ENCODE measurements at regions of chr12 and their contacts with region 1.

Region 1: DNA sequence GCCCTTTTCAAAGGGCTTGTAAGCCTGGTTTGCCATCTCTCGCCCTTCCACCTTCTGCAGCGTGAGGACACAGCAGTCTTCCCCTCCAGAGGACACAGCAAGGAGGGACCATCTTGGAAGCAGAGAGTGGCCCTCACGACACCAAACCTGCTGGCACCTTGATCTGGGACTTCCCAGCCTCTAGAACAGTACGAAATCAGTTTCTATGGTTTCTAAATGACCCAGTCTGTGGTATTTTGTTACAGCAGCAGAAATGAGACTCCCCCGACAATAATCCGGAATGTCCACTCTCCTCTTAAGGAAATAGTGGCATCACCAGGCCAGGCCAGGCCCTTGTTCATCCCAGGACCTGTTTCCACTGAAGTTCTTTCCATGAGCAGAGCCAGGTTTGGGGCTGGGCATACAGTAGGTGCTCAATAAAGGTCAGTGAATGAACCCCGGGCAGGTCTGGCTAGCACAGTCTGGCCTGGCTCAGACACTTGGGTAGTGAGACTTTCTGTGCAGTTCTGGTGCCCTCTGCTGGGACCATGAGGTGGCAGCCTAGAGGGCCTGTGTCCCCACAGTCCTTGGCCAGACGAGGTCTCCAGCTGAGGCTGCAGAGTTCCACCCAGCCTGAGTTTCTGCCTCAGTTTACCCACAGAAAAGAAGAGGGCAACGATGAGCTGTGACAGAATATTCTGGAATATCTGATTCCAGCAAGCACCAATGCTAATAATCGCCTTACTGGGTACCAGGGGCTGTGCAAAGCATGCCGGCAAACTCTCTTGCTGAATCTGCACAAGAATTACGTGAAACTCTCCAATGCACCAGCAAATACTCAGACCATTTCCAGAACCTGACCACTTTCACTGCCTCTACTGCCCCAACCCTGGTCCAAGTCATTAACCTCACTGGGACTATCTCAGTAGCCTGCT is 14.0 kb downstream of the ABCB9 start:
- DNase-seq: peak; percentile 50 to 85 (median 76)
- ATAC-seq: peak; percentile 99
- H3K4me3 ChIP-seq: no peak overlapping the region
- H3K4me3 Mint-ChIP-seq: no peak overlapping the region
- H3K27ac ChIP-seq: no peak overlapping the region
- H3K27ac Mint-ChIP-seq: peak overlapping the region; percentile 45
- H3K4me1 ChIP-seq: peaks cover 6% of the 10 kb centered on the region
- H3K4me1 Mint-ChIP-seq: peaks cover 4% of the 10 kb centered on the region
- H3K27me3 ChIP-seq: no peaks in the 10 kb centered on the region
- H3K27me3 Mint-ChIP-seq: no peaks in the 10 kb centered on the region
- CTCF ChIP-seq: peak; percentile 91

Region 2: DNA sequence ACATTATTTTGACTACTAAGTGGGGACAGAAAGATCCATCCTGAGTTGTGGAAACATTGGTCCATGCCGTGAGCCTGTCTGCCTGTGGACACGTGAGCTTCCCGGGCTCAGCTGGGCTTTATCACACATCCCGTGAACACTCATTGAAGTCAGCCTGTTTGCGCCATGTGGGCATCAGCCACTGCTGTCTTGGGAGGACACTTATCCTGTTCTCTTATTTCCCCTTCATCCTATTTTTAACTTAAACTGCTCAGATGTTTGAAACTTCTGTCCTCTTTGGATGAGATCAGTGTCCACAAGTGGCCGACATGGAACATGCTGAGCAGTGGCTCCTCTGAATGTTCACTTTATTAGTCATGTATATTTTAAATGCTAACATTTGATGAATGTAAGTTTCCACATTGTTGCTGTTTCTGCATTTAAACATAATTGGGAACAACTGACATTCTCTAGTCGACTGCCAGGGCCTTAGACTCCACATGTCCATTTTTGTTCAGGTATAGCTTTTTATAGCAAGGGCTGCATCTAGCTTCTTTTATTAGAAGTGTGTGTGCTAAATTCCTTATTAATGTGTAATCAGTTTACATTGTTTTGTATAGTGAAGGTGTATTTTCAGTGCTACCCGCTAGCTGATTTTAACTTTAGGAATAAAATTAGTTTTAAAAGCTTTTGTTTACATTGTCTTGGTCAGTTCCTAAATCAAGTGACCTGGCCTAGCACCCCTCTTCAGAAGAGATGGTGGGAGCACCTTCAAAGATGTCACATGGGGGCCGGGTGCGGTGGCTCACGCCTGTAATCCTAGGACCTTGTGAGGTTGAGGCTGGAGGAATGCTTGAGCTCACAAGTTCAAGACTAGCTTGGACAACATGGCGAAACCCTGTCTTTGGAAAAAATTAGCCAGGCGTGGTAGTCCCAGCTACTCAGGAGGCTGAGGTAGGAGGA is 1528.3 kb before region 1 on chr12:
- CTCF ChIA-PET with region 1: no interaction called
- POLR2A ChIA-PET with region 1: no interaction called
- intact Hi-C with region 1: no loop called
- DNase-seq: no peak
- ATAC-seq: no peak
- H3K4me3 ChIP-seq: no peak overlapping the region
- H3K4me3 Mint-ChIP-seq: no peak overlapping the region
- H3K27ac ChIP-seq: no peak overlapping the region
- H3K27ac Mint-ChIP-seq: no peak overlapping the region
- H3K4me1 ChIP-seq: no peaks in the 10 kb centered on the region
- H3K4me1 Mint-ChIP-seq: peaks cover 3% of the 10 kb centered on the region
- H3K27me3 ChIP-seq: no peaks in the 10 kb centered on the region
- H3K27me3 Mint-ChIP-seq: no peaks in the 10 kb centered on the region
- CTCF ChIP-seq: no peak

Region 3: GRCh38 chr12:122860346-122861090 is 91.7 kb before region 1 on chr12:
- CTCF ChIA-PET with region 1: interaction called, 311 read pairs
- POLR2A ChIA-PET with region 1: interaction called, 3 read pairs
- intact Hi-C with region 1: loop called (anchors 1 kb)
- DNase-seq: peak; percentile 65 to 92 (median 82)
- ATAC-seq: peak; percentile 61
- H3K4me3 ChIP-seq: no peak overlapping the region
- H3K4me3 Mint-ChIP-seq: no peak overlapping the region
- H3K27ac ChIP-seq: no peak overlapping the region
- H3K27ac Mint-ChIP-seq: peak overlapping the region; percentile 57
- H3K4me1 ChIP-seq: peaks cover 5% of the 10 kb centered on the region
- H3K4me1 Mint-ChIP-seq: peaks cover 3% of the 10 kb centered on the region
- H3K27me3 ChIP-seq: no peaks in the 10 kb centered on the region
- H3K27me3 Mint-ChIP-seq: no peaks in the 10 kb centered on the region
- CTCF ChIP-seq: peak; percentile 64

Region 4: GRCh38 chr12:122871851-122872780 is 80.1 kb before region 1 on chr12:
- CTCF ChIA-PET with region 1: interaction called, 311 read pairs
- POLR2A ChIA-PET with region 1: no interaction called
- intact Hi-C with region 1: no loop called
- DNase-seq: peak in 4 of 9 experiments; percentile 36 to 65 (median 44)
- ATAC-seq: peak; percentile 43
- H3K4me3 ChIP-seq: peak overlapping the region; percentile 19 to 48
- H3K4me3 Mint-ChIP-seq: peak overlapping the region; percentile 85
- H3K27ac ChIP-seq: peak overlapping the region; percentile 3 to 78
- H3K27ac Mint-ChIP-seq: peak overlapping the region; percentile 86
- H3K4me1 ChIP-seq: peaks cover 62% of the 10 kb centered on the region
- H3K4me1 Mint-ChIP-seq: peaks cover 63% of the 10 kb centered on the region
- H3K27me3 ChIP-seq: no peaks in the 10 kb centered on the region
- H3K27me3 Mint-ChIP-seq: no peaks in the 10 kb centered on the region
- CTCF ChIP-seq: no peak

Region 5: DNA sequence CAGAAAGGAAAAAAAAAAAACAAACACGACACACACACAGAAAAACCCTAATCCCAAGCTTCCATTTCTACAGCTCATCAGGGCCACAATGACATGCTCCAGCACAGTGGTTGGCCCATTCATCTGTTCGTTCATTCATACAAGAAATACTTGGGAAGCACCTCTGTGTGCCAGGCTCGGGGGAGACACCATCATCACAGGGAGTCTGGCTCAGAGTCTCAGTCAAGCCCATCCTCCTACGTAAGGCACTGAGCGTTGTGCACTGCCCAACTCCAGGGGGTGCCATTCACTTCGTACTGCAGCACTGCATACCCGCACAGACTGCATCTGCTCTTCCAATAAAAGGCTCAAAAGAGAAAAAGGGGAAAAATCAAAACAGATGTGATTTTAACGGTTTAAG is 71.6 kb before region 1 on chr12:
- CTCF ChIA-PET with region 1: interaction called, 31 read pairs
- POLR2A ChIA-PET with region 1: interaction called, 4 read pairs
- intact Hi-C with region 1: loop called in 1 of 2 experiments (anchors 1 kb)
- DNase-seq: peak in 4 of 9 experiments; percentile 43 to 58 (median 48)
- ATAC-seq: peak; percentile 35
- H3K4me3 ChIP-seq: no peak overlapping the region
- H3K4me3 Mint-ChIP-seq: no peak overlapping the region
- H3K27ac ChIP-seq: peak overlapping the region in 1 of 2 experiments; percentile 37
- H3K27ac Mint-ChIP-seq: peak overlapping the region; percentile 41
- H3K4me1 ChIP-seq: peaks cover 78% of the 10 kb centered on the region
- H3K4me1 Mint-ChIP-seq: peaks cover 91% of the 10 kb centered on the region
- H3K27me3 ChIP-seq: no peaks in the 10 kb centered on the region
- H3K27me3 Mint-ChIP-seq: no peaks in the 10 kb centered on the region
- CTCF ChIP-seq: peak; percentile 36

Region 6: DNA sequence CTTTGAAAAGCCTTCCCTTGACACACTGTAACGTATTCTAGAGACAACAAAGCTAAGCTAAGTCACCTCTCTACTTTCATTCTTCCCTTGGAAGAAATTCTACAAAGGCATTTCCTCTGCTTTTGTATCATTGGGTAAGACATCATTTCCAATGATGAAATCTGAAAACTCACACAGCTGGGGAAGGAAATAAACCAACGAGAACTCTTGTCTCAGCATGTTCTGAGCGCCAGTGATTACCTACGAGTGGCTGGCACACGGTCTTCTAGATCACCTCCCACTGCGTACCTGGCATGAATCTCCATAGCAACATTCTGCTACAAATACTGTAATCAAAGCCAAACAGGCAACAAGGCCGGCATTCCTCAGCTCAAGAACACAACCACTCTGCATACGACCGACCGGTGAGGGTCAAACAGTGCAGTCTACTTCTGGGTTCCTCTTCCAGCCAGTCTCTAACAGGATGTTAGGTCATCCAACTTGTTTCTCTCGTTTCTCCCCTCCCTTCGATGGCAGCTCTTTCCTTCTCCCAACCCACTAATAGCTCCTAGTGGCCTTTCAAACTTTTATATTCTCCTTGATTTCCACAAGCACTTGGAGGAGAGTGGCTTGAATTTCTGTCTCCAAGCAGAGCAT is 63.9 kb before region 1 on chr12:
- CTCF ChIA-PET with region 1: interaction called, 31 read pairs
- POLR2A ChIA-PET with region 1: interaction called, 4 read pairs
- intact Hi-C with region 1: no loop called
- DNase-seq: peak in 6 of 9 experiments; percentile 42 to 89 (median 71)
- ATAC-seq: peak; percentile 88
- H3K4me3 ChIP-seq: peak overlapping the region in 1 of 2 experiments; percentile 26
- H3K4me3 Mint-ChIP-seq: peak overlapping the region; percentile 77
- H3K27ac ChIP-seq: peak overlapping the region; percentile 17 to 63
- H3K27ac Mint-ChIP-seq: peak overlapping the region; percentile 93
- H3K4me1 ChIP-seq: peaks cover 74% of the 10 kb centered on the region
- H3K4me1 Mint-ChIP-seq: peaks cover 87% of the 10 kb centered on the region
- H3K27me3 ChIP-seq: no peaks in the 10 kb centered on the region
- H3K27me3 Mint-ChIP-seq: no peaks in the 10 kb centered on the region
- CTCF ChIP-seq: no peak

Region 7: DNA sequence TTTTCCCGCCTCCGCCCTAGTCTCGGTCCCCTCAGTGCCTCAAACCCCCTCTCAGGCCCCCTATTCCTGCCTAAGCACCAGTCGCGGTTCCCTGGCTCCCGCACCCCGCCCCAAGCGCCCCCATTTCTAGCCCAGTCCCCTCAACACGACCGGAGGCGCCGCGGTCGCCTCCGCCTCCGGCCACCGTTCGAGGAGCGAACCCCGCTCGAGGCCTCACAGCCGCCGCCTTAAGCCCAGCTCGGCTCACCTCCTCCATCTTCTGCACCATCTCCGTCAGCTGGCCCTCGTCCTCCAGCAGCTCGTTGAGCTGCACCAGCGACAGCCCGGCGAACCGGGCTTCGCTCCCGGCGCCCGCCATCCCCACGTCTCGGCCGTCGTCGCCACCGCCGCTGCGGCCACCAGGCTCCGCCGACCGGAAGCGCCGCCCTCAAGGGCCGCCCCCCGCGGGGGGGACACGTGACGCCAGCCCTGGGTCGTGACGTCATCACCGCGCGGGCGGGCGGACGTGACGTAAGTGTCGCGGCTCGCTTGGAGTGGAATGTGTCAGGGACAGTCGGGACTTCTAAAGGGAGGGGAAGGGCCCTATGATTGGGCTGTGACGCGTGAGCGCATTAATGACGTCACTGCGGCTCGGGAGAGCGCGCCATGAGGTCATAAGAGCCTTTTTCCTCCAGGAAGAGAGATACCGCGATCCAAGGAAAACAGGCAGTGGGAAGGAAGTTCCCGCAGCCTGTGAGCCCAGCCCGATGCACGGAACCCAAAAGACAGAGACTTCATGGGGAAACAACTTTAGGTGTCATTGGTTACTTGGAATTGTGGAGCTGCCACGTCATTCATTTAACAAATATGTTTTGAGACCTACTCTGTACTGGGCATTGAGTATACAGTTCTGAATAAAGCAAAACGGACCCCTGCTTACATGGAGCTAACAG is 56.3 kb before region 1 on chr12 and contains the start of gene VPS37B:
- CTCF ChIA-PET with region 1: interaction called, 49 read pairs
- POLR2A ChIA-PET with region 1: interaction called, 3 read pairs
- intact Hi-C with region 1: no loop called
- DNase-seq: peak; percentile 79 to 96 (median 91)
- ATAC-seq: peak; percentile 63
- H3K4me3 ChIP-seq: peak within 1 kb of the TSS; percentile 80 to 93
- H3K4me3 Mint-ChIP-seq: peak within 1 kb of the TSS; percentile 91
- H3K27ac ChIP-seq: peak within 1 kb of the TSS; percentile 92 to 96
- H3K27ac Mint-ChIP-seq: peak within 1 kb of the TSS; percentile 99
- H3K4me1 ChIP-seq: peaks cover 82% of the 10 kb centered on the region
- H3K4me1 Mint-ChIP-seq: peaks cover 89% of the 10 kb centered on the region
- H3K27me3 ChIP-seq: no peaks in the 10 kb centered on the region
- H3K27me3 Mint-ChIP-seq: no peaks in the 10 kb centered on the region
- CTCF ChIP-seq: no peak
- total RNA-seq, gene VPS37B: 145 to 148 TPM

Region 8: DNA sequence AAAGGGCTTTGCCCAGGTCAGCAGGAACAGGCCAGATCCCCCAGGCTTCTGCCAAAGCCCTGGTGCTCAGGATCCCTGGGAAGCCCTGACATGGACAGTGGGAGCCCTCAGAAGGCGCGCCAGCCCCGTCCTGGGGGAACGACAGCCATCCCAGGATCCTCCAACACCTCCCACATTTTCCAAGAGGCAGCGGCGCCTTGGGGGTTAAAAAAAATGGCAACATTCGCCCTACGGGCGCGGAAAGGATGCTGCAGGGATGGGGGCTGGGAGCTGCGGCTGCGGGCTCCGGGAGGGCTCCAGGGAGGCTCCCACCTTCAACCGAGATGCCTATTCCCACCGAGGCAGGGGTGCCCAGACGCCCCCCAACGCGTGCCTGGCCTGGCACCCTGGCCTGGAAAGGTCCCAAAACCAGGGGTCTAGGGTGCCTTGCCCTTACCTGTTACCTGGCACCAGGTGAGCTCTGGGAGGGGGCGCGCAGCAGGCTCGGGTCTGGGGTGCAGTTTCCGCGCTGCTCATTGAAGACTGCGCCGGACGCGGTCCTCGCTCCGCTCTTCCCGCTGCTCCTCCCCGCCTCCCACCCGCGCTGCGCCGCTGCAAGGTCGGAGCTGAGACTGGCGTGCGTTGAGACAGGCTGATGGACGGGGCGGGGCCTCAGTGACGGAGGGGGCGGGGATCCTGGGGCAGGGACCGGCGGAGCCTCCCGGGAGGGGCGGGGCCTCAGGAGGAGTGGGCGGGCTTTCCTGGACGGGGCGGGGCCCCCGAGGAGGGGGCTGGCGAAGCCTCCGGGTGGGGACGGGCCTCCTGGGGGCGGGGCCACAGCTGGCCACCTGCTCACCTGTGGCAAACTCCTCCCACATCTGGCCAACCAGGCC is 13.9 kb after region 1 on chr12 and contains the start of gene ABCB9:
- CTCF ChIA-PET with region 1: interaction called, 13 read pairs
- POLR2A ChIA-PET with region 1: interaction called, 3 read pairs
- intact Hi-C with region 1: no loop called
- DNase-seq: peak; percentile 87 to 95 (median 92)
- ATAC-seq: peak; percentile 98
- H3K4me3 ChIP-seq: peak within 1 kb of the TSS; percentile 67 to 87
- H3K4me3 Mint-ChIP-seq: peak within 1 kb of the TSS; percentile 76
- H3K27ac ChIP-seq: peak within 1 kb of the TSS; percentile 37 to 46
- H3K27ac Mint-ChIP-seq: peak within 1 kb of the TSS; percentile 28
- H3K4me1 ChIP-seq: peaks cover 15% of the 10 kb centered on the region
- H3K4me1 Mint-ChIP-seq: peaks cover 9% of the 10 kb centered on the region
- H3K27me3 ChIP-seq: no peaks in the 10 kb centered on the region
- H3K27me3 Mint-ChIP-seq: no peaks in the 10 kb centered on the region
- CTCF ChIP-seq: no peak
- total RNA-seq, gene ABCB9: 3.5 to 3.6 TPM